Lower leg skin (tissue), 4 donors: ENCODE measurements at regions of chr17 and their contacts with region 1.

Region 1: DNA sequence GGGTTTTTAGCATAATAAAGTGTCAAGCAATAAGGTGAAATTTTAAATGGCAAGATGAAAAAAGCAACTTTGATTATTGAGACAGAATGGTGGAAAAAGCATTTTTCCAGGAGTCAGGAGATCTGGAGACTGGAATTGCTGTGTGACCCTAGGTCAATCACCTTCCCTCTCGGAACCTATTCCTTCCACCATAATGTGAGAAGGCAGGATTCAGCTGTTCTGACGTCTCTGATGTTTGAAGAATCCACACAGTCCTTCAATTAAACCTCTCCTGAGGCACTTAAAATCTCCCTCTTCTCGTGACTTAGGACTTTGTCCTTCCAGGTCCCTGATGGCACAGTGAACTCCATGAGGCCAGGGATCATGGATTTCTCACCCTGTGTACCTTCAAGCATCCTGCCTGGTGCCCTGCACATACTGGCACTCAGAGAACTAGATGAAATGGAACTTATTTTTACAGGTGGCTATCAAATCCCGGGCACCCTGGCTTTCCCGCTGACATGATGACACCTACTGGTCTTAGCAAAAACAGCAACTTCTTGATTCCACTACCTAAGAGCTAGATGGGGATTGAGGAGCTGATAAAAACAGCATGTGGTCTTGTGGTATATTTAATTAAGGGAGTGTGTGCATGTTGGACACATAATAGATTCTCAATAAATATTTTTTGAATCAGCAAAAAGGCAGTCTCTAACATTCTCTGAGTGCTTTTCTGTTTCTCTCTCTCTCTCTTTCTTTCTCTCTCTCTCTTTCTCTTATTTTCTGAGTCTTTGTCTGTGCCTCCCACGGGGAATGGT is 2.3 kb upstream of the CCDC182 start:
- DNase-seq: peak; percentile 18 to 86
- H3K4me3 ChIP-seq: no peak overlapping the region
- CTCF ChIP-seq: no peak
- POLR2A ChIP-seq: no peak

Region 2: DNA sequence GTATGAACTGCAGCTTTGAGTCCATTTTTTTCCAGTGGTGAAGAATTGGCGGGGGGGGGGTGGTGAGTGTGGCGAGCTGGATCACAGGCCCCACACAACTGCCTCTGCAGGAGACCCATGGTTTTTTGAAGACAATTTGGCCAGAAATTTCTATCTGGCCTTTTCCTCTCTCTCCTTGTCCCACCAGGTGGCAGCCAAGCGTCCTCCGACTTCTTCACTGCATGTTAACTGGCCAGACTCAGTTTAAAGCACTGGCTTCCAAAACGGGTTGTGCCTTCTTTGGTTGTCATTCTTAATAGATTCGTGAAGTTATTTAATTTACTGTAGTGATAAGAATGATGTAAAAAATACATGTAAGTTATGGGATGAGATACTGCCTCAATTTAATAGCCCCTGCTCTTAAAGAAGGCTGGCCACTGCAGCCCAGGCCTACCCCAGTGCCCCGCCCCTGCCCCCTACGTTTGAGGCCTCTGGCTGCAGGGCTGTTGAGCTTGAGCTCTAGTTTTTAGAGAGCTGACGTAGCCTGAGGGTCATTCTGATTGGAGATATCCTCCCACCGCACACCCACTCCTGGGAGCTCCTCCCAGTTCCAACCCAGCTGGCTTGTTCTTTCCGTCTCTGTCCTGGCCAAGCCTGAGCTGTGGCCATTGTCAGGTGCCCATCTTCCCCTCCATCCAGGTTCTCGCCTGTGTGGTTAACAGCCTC is 625.9 kb before region 1 on chr17:
- intact Hi-C with region 1: loop called (anchors 10 kb)
- DNase-seq: no peak
- H3K4me3 ChIP-seq: no peak overlapping the region
- CTCF ChIP-seq: no peak
- POLR2A ChIP-seq: no peak